ENCODE measurements at regions of chr15 and their contacts with region 1.

Region 1: DNA sequence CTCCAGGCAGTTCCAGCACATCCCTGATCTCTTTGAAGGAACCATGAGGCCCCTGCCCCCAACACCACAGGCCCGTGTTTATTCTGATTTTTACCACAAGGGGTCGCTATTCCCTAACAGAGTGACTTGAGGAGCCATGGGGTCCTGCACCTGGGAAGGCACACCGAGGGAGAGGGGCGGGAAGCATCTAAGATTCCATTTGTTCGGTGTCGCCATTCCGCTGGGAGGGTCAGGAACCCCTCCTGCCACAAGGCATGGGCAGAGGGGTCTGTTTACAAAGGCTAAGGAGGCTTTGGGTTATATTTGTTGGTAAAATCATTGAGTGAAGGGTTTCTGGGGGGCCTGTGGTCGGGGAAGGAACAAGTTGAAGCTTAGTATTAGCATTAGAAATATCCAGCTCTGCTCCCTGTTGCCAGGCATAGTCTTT is 77.1 kb downstream of the WDR76 start:
- DNase-seq: peak; percentile 89
- H3K4me3 Mint-ChIP-seq: no peak overlapping the region
- H3K27ac Mint-ChIP-seq: no peak overlapping the region
- H3K4me1 Mint-ChIP-seq: peaks cover 2% of the 10 kb centered on the region
- H3K27me3 Mint-ChIP-seq: no peaks in the 10 kb centered on the region

Region 2: GRCh38 chr15:44066316-44066740 is 162.5 kb after region 1 on chr15:
- intact Hi-C with region 1: loop called (anchors 1 kb)
- DNase-seq: peak; percentile 86
- H3K4me3 Mint-ChIP-seq: no peak overlapping the region
- H3K27ac Mint-ChIP-seq: no peak overlapping the region
- H3K4me1 Mint-ChIP-seq: peaks cover 5% of the 10 kb centered on the region
- H3K27me3 Mint-ChIP-seq: peaks cover 27% of the 10 kb centered on the region

Region 3: DNA sequence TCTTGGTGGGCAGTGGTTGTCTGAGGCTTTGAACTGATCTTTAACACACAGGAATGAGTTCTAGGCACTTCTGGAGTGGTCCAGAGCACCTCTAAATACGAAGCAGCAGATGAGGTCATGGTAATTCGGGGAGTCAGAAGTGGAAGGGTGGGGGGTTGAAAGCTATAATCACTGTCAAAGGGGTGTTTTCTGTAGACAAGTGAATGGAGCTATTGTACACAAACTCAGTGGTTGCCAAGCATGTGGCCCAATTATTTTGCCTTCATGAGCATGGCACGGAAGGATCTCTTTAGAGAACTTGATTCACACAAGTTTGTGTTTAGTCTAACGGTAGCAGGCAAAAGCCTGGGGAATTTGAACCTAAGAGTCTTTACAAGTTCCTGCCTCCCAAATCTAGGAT is 284.9 kb after region 1 on chr15:
- intact Hi-C with region 1: no loop called
- DNase-seq: no peak
- H3K4me3 Mint-ChIP-seq: no peak overlapping the region
- H3K27ac Mint-ChIP-seq: no peak overlapping the region
- H3K4me1 Mint-ChIP-seq: peaks cover under 1% of the 10 kb centered on the region
- H3K27me3 Mint-ChIP-seq: peaks cover 40% of the 10 kb centered on the region

Region 4: GRCh38 chr15:44219073-44219472 is 315.2 kb after region 1 on chr15:
- intact Hi-C with region 1: loop called (anchors 1 kb)
- DNase-seq: no peak
- H3K4me3 Mint-ChIP-seq: no peak overlapping the region
- H3K27ac Mint-ChIP-seq: no peak overlapping the region
- H3K4me1 Mint-ChIP-seq: peaks cover 2% of the 10 kb centered on the region
- H3K27me3 Mint-ChIP-seq: peaks cover 19% of the 10 kb centered on the region

Measured in activated CD4-positive, alpha-beta T cell treated with anti-CD3 and anti-CD28 coated beads, Interleukin-2, amount 10 ng/mL, durations not matched to agents 24 days and 14 days (primary cell).